ENCODE measurements at regions of chr11 and their contacts with region 1.

Region 1: GRCh38 chr11:93238956-93239355 is 41.2 kb upstream of the SLC36A4 start:
- DNase-seq: no peak
- ATAC-seq: no peak
- H3K4me3 ChIP-seq: no peak overlapping the region
- H3K4me3 Mint-ChIP-seq: no peak overlapping the region
- H3K27ac ChIP-seq: no peak overlapping the region
- H3K27ac Mint-ChIP-seq: no peak overlapping the region
- H3K4me1 ChIP-seq: no peaks in the 10 kb centered on the region
- H3K4me1 Mint-ChIP-seq: no peaks in the 10 kb centered on the region
- H3K27me3 ChIP-seq: peaks cover 0 to 6% of the 10 kb centered on the region in 2 experiments
- H3K27me3 Mint-ChIP-seq: peaks cover 41 to 44% of the 10 kb centered on the region in 2 donors

Region 2: DNA sequence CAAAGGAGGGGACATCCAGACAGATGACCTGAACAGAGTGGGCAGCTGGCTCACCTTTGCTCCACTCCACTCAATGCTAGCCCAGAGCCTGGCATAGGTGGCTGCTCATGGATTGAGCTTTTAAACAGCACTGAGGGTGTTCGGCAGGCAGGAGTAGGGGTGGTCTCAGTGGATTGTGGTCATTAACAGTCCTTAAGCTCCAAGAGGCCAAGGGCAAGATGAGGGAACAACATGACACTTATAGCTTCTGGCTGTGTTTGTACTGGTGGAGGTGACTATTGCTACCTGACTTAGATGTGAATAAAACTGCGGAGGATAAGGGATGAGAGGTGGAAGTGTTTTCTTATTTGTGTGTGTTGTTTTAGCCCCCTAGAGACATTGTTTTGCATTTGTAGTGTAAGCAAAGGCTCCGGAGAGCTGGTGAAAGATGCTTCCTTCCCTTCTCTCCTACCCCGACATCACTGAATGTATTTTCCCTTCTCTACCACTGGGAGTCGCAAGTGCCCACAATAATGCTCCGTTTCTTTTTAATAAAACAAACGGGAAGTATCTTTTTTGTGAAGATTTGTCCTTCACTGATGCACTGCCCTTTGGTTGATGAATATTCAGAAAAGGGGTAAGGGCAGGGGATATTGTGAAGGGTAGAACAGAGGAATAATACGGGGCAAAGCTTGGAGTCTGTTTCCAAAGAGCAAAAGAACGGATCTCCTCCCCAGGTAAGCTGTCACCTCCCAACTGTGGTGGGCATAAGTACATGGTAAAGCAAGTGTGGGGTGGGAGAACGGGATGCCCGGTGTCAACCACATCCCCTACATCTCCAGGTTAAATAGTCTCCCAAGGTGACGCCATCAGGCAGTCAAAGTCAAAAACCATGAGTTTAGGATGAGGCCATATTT is 297.0 kb before region 1 on chr11:
- CTCF ChIA-PET with region 1: no interaction called
- POLR2A ChIA-PET with region 1: interaction called in 1 of 2 experiments, 10 read pairs
- DNase-seq: peak in 3 of 35 experiments; percentile 1 to 40 (median 3)
- ATAC-seq: no peak
- H3K4me3 ChIP-seq: no peak overlapping the region
- H3K4me3 Mint-ChIP-seq: no peak overlapping the region
- H3K27ac ChIP-seq: no peak overlapping the region
- H3K27ac Mint-ChIP-seq: no peak overlapping the region
- H3K4me1 ChIP-seq: no peaks in the 10 kb centered on the region
- H3K4me1 Mint-ChIP-seq: no peaks in the 10 kb centered on the region
- H3K27me3 ChIP-seq: no peaks in the 10 kb centered on the region
- H3K27me3 Mint-ChIP-seq: peaks cover 11 to 17% of the 10 kb centered on the region in 2 donors

Measured in T-cell (primary cell).